ENCODE measurements at regions of chr16 and their contacts with region 1.

Region 1: DNA sequence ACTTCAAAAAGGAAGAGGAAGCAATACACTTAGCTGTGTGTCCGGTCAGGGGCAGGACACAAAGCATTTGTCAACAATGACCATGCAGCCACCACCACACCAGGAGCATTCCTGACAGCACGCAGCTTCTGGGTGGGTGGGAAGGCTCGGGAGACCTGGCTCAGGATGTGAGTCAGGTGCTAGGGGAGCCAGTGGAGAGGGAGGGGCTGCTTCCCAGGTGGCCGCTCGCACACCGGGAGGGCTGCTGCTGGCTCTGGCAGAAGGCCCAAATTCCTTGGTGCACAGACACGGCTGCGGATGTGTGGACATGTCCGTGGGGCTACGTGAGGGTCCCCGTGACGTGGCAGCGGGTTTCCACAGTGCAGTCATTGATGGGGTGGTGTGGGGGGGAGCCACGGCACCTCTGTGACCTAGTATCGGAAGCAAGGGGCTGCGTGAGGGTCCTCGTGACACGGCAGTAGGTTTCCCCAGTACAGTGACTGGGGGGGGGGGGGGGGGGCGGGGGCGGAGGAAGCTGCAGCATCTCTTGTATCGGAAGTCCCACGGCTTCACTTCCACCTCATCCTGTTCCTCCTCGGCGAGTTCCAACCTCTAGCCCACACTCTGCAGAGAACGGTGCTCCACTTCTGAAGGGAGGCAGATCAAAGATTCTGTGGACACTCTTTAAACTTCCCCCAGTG is 112.8 kb downstream of the ZNF778 start:
- DNase-seq: peak in 1 of 5 donors; percentile 88
- H3K4me3 ChIP-seq: no peak overlapping the region
- H3K27ac ChIP-seq: peak overlapping the region in 1 of 2 donors; percentile 55
- H3K4me1 ChIP-seq: peaks cover 0 to 34% (median 33%) of the 10 kb centered on the region in 3 donors
- H3K27me3 ChIP-seq: no peaks in the 10 kb centered on the region
- CTCF ChIP-seq: no peak

Region 2: GRCh38 chr16:89395141-89395874 is 65.0 kb after region 1 on chr16:
- intact Hi-C with region 1: no loop called
- DNase-seq: peak; percentile 87 to 96 (median 94)
- H3K4me3 ChIP-seq: peak overlapping the region in 2 of 3 donors; percentile 15 to 16
- H3K27ac ChIP-seq: peak overlapping the region; percentile 20 to 77
- H3K4me1 ChIP-seq: peaks cover 3 to 50% (median 41%) of the 10 kb centered on the region in 3 donors
- H3K27me3 ChIP-seq: no peaks in the 10 kb centered on the region
- CTCF ChIP-seq: no peak

Region 3: GRCh38 chr16:89507834-89508590 is 177.7 kb after region 1 on chr16 and contains the start of gene SPG7:
- intact Hi-C with region 1: loop called (anchors 10 kb)
- DNase-seq: peak; percentile 90 to 95 (median 93)
- H3K4me3 ChIP-seq: peak within 1 kb of the TSS; percentile 81 to 89 (median 86)
- H3K27ac ChIP-seq: peak within 1 kb of the TSS; percentile 89 to 90
- H3K4me1 ChIP-seq: peaks cover 4 to 30% (median 11%) of the 10 kb centered on the region in 3 donors
- H3K27me3 ChIP-seq: no peaks in the 10 kb centered on the region
- CTCF ChIP-seq: no peak
- total RNA-seq, gene SPG7: 108 TPM

Measured in kidney (tissue), 22 donors.